Transverse colon (tissue), 4 donors: ENCODE measurements at regions of chr15 and their contacts with region 1.

Region 1: DNA sequence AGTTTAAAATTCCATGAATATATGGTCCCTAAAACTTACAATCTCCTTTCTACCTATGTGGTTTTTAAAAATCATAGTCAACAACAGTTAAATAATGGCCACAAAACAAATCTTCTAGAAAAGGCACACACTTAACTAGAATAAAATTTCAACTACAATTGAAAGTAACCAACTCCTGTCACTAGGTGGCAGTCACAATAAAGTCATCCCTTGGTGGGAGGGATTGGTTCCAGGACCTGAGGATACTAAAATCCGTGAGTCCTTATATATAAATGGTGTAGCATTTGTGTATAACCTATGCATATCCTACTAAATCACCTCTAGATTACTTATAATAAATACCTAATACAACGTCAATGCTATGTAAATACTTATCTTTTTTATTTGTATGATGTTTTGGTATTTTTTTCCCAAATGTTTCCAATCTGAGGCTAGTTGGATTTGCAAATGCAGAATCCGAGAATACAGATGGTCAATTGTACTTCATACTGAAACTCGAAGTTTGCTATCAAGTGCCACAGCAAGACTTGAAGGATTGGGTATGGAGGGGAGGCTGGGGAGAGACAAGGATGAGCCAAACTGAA is 172.6 kb downstream of the FMN1 start:
- DNase-seq: no peak
- H3K4me3 ChIP-seq: no peak overlapping the region
- H3K27ac ChIP-seq: peak overlapping the region; percentile 3 to 54 (median 40)
- H3K4me1 ChIP-seq: peaks cover 0 to 18% (median 8%) of the 10 kb centered on the region in 4 donors
- H3K27me3 ChIP-seq: no peaks in the 10 kb centered on the region
- CTCF ChIP-seq: peak; percentile 57 to 75 (median 57)
- EP300 ChIP-seq: no peak
- POLR2A ChIP-seq: no peak

Region 2: GRCh38 chr15:33074942-33075341 is 53.0 kb after region 1 on chr15:
- in situ Hi-C with region 1: loop called in 1 of 4 experiments (anchors 10 kb)
- intact Hi-C with region 1: no loop called
- DNase-seq: peak; percentile 39
- H3K4me3 ChIP-seq: no peak overlapping the region
- H3K27ac ChIP-seq: no peak overlapping the region
- H3K4me1 ChIP-seq: no peaks in the 10 kb centered on the region
- H3K27me3 ChIP-seq: no peaks in the 10 kb centered on the region
- CTCF ChIP-seq: peak in 3 of 5 experiments; percentile 42 to 61 (median 48)
- EP300 ChIP-seq: no peak
- POLR2A ChIP-seq: no peak